SK-N-SH (cell line): ENCODE measurements at regions of chr2 and their contacts with region 1.

Region 1: GRCh38 chr2:48471048-48471474 is 58.9 kb upstream of the STON1 start:
- DNase-seq: peak; percentile 24
- H3K4me3 ChIP-seq: no peak overlapping the region
- H3K27ac ChIP-seq: peak overlapping the region; percentile 11; a peak in 1 of 4 replicates
- H3K4me1 ChIP-seq: no peaks in the 10 kb centered on the region; a peak in 1 of 4 replicates
- H3K27me3 ChIP-seq: no peaks in the 10 kb centered on the region
- CTCF ChIP-seq: peak; percentile 80
- EP300 ChIP-seq: no peak
- RAD21 ChIP-seq: peak; percentile 66

Region 2: GRCh38 chr2:48448274-48449061 is 22.6 kb before region 1 on chr2:
- CTCF ChIA-PET with region 1: interaction called, 10 read pairs
- POLR2A ChIA-PET with region 1: no interaction called
- DNase-seq: no peak
- H3K4me3 ChIP-seq: no peak overlapping the region
- H3K27ac ChIP-seq: peak overlapping the region in 1 of 2 experiments; percentile 66; a peak in 3 of 4 replicates
- H3K4me1 ChIP-seq: peaks cover 15 to 16% of the 10 kb centered on the region in 2 experiments; a peak in 3 of 4 replicates
- H3K27me3 ChIP-seq: no peaks in the 10 kb centered on the region
- CTCF ChIP-seq: no peak
- EP300 ChIP-seq: no peak
- RAD21 ChIP-seq: no peak

Region 3: GRCh38 chr2:48589170-48589767 is 118.2 kb after region 1 on chr2:
- CTCF ChIA-PET with region 1: interaction called, 16 read pairs
- POLR2A ChIA-PET with region 1: no interaction called
- DNase-seq: peak; percentile 58
- H3K4me3 ChIP-seq: no peak overlapping the region
- H3K27ac ChIP-seq: no peak overlapping the region
- H3K4me1 ChIP-seq: no peaks in the 10 kb centered on the region
- H3K27me3 ChIP-seq: no peaks in the 10 kb centered on the region
- CTCF ChIP-seq: peak; percentile 93
- EP300 ChIP-seq: no peak
- RAD21 ChIP-seq: peak; percentile 89